ENCODE measurements at regions of chr4 and their contacts with region 1.

Region 1: GRCh38 chr4:168710353-168710946 is 213.6 kb downstream of the PALLD start:
- DNase-seq: peak in 1 of 2 donors; percentile 60
- ATAC-seq: peak; percentile 68
- H3K4me3 ChIP-seq: no peak overlapping the region
- H3K27ac ChIP-seq: peak overlapping the region; percentile 64 to 96
- H3K4me1 ChIP-seq: peaks cover 4 to 5% of the 10 kb centered on the region in 2 donors
- H3K27me3 ChIP-seq: no peaks in the 10 kb centered on the region

Region 2: GRCh38 chr4:168514249-168514852 is 196.1 kb before region 1 on chr4:
- intact Hi-C with region 1: loop called in 1 of 2 experiments (anchors 10 kb)
- DNase-seq: no peak
- ATAC-seq: no peak
- H3K4me3 ChIP-seq: no peak overlapping the region
- H3K27ac ChIP-seq: no peak overlapping the region
- H3K4me1 ChIP-seq: no peaks in the 10 kb centered on the region
- H3K27me3 ChIP-seq: no peaks in the 10 kb centered on the region

Region 3: DNA sequence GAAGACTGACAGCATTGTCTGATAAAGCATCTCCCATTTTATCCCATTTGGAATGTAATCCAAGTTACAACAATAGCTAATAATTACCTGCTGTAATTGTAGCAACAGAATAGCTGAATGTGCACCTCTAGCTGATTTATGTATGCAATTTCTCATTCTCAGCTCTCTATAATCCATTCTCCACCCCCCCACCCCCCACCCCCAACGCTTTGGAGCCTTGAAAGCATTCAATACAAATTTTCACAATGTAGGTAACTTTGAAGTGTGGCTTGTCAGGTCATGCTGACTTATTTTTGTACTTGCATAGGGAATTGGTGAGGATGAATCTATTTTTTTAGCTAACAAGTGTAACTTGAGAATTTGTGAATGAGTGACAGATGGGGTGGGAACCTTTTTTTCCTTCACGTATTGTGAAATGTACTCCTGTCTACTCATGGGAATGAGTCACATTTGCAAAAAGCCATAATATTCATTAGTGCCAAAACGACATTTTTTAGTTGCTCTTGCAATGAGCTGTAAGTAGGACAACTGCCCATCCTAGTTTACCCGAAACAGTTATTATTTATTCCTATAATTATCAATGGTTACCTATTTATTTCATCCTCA is 54.3 kb before region 1 on chr4:
- intact Hi-C with region 1: no loop called
- DNase-seq: no peak
- ATAC-seq: no peak
- H3K4me3 ChIP-seq: no peak overlapping the region
- H3K27ac ChIP-seq: no peak overlapping the region
- H3K4me1 ChIP-seq: peaks cover 2 to 4% of the 10 kb centered on the region in 2 donors
- H3K27me3 ChIP-seq: no peaks in the 10 kb centered on the region

Region 4: GRCh38 chr4:168765726-168766125 is 55.3 kb after region 1 on chr4:
- intact Hi-C with region 1: loop called (anchors 5 to 10 kb)
- DNase-seq: peak in 1 of 2 donors; percentile 80
- ATAC-seq: peak; percentile 54
- H3K4me3 ChIP-seq: no peak overlapping the region
- H3K27ac ChIP-seq: peak overlapping the region in 1 of 2 donors; percentile 61
- H3K4me1 ChIP-seq: peaks cover 0 to 6% of the 10 kb centered on the region in 2 donors
- H3K27me3 ChIP-seq: no peaks in the 10 kb centered on the region

Region 5: GRCh38 chr4:168831919-168832762 is 121.7 kb after region 1 on chr4:
- intact Hi-C with region 1: loop called (anchors 2 to 5 kb)
- DNase-seq: peak; percentile 90 to 95
- ATAC-seq: peak; percentile 94
- H3K4me3 ChIP-seq: peak overlapping the region; percentile 54 to 90
- H3K27ac ChIP-seq: peak overlapping the region; percentile 79 to 97
- H3K4me1 ChIP-seq: peaks cover 0 to 6% of the 10 kb centered on the region in 2 donors
- H3K27me3 ChIP-seq: no peaks in the 10 kb centered on the region

Region 6: GRCh38 chr4:168917138-168917779 is 206.8 kb after region 1 on chr4:
- intact Hi-C with region 1: loop called (anchors 2 to 5 kb)
- DNase-seq: peak in 1 of 2 donors; percentile 36
- ATAC-seq: peak; percentile 61
- H3K4me3 ChIP-seq: no peak overlapping the region
- H3K27ac ChIP-seq: no peak overlapping the region
- H3K4me1 ChIP-seq: no peaks in the 10 kb centered on the region
- H3K27me3 ChIP-seq: no peaks in the 10 kb centered on the region

Region 7: DNA sequence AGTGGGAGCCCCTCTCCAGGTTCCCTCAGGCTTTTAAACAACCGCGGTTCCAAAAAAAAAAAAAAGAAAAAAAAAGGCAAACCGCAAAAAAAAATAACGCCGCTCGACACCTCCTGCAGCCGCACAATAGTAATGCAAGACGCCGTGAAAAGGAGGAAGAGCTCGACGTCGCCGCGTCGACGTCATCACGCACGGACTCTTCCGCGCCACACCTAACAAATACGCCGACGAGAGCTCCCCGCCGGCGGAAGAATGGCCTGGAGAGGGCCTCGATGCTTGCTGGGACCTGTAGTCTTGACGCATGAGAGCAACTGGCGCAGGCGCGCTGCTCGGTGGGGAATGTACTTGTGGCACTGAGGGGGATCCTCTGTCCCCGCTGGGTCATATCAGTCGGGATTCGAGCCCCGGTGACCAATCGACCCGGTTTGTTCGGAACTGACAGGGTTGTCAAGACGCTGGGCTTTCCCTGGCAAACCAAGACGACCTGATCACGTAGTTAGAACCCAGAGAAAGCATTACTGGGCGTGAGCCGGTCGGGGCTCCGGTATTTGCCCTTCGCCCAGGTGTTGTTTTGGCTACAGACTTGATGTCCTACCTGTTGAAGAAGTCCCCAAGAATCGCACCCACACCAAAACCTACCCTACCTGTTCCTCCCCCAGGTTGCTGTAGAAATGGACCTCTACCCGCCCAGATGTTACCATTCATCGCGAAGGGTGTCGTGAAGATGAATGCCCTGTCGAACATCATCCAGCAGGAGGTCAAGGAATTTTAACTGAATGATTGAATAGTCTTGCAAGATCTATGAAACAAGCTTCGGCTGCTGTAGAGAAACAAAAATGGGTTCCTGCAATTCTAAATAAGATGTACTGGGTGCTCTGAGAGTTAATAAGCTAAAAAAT is 299.9 kb after region 1 on chr4 and contains the start of gene CBR4:
- intact Hi-C with region 1: loop called in 1 of 2 experiments (anchors 10 kb)
- DNase-seq: peak; percentile 99
- ATAC-seq: peak; percentile 98
- H3K4me3 ChIP-seq: peak within 1 kb of the TSS; percentile 83 to 85
- H3K27ac ChIP-seq: peak within 1 kb of the TSS in 1 of 2 donors; percentile 77
- H3K4me1 ChIP-seq: peaks cover 0 to 3% of the 10 kb centered on the region in 2 donors
- H3K27me3 ChIP-seq: no peaks in the 10 kb centered on the region
- total RNA-seq, gene CBR4: 13.6 to 20.5 TPM